OCI-LY7 (cell line): ENCODE measurements at regions of chr1 and their contacts with region 1.

Region 1: GRCh38 chr1:226121587-226122400 is 59.3 kb downstream of the H3-3A start:
- DNase-seq: peak; percentile 92
- H3K4me3 ChIP-seq: peak overlapping the region; percentile 75
- H3K27ac ChIP-seq: peak overlapping the region; percentile 95
- H3K4me1 ChIP-seq: peaks cover 62% of the 10 kb centered on the region
- CTCF ChIP-seq: peak; percentile 75

Region 2: GRCh38 chr1:225999227-225999911 is 122.4 kb before region 1 on chr1 and contains the start of gene SDE2:
- CTCF ChIA-PET with region 1: interaction called, 3 read pairs
- POLR2A ChIA-PET with region 1: interaction called, 4 read pairs
- intact Hi-C with region 1: loop called (anchors 2 kb)
- DNase-seq: peak; percentile 99
- H3K4me3 ChIP-seq: peak within 1 kb of the TSS; percentile 93
- H3K27ac ChIP-seq: peak within 1 kb of the TSS; percentile 96
- H3K4me1 ChIP-seq: peaks cover 64% of the 10 kb centered on the region
- CTCF ChIP-seq: no peak
- total RNA-seq, gene SDE2: 18.2 and 22.0 TPM in 2 replicates

Region 3: GRCh38 chr1:226109829-226110248 is 12.0 kb before region 1 on chr1:
- CTCF ChIA-PET with region 1: interaction called, 9 read pairs
- POLR2A ChIA-PET with region 1: interaction called, 14 read pairs
- intact Hi-C with region 1: loop called (anchors 1 kb)
- DNase-seq: peak; percentile 72
- H3K4me3 ChIP-seq: peak overlapping the region; percentile 73
- H3K27ac ChIP-seq: peak overlapping the region; percentile 80
- H3K4me1 ChIP-seq: peaks cover 41% of the 10 kb centered on the region
- CTCF ChIP-seq: no peak

Region 4: GRCh38 chr1:226186124-226187018 is 64.6 kb after region 1 on chr1 and contains the start of gene ACBD3:
- CTCF ChIA-PET with region 1: interaction called, 14 read pairs
- POLR2A ChIA-PET with region 1: interaction called, 10 read pairs
- intact Hi-C with region 1: loop called (anchors 1 kb)
- DNase-seq: peak; percentile 92
- H3K4me3 ChIP-seq: peak within 1 kb of the TSS; percentile 82
- H3K27ac ChIP-seq: peak within 1 kb of the TSS; percentile 66
- H3K4me1 ChIP-seq: peaks cover 42% of the 10 kb centered on the region
- CTCF ChIP-seq: 0 out of 2 replicates have a peak, but pooled peaks have one; percentile 15
- total RNA-seq, gene ACBD3: 30.3 and 35.3 TPM in 2 replicates

Region 5: DNA sequence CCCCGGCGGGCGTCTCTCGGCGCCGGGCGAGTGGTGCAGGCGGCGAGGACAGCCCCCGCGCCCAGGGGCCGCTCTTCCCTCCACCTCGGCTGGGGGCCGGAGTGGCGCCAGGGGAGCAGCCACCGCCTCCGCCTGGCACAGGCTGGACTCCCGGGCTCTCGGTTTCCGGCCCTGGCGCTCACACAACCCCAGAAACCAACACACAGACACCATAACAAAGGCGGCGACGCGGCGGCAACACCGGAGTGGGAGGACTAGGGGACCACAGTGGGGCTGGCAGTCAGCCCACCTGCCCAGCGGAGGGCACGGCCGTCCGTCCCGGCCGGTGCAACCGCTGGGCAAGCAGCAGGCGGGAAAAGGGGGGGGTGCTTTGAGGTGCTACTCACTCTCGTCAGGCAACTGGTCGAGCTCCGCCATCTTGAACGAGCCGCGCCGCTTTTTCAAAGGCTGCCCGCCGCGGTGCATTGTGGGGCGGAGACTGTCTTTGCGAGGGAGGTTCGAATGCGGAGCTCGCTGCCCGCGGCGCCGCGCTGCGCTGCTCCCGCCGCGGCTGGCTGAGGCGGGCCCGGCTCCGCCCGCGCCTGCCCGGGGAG is 187.0 kb after region 1 on chr1 and contains the start of gene LIN9:
- CTCF ChIA-PET with region 1: interaction called, 8 read pairs
- POLR2A ChIA-PET with region 1: interaction called, 5 read pairs
- intact Hi-C with region 1: loop called (anchors 1 kb)
- DNase-seq: peak; percentile 95
- H3K4me3 ChIP-seq: peak within 1 kb of the TSS; percentile 97
- H3K27ac ChIP-seq: peak within 1 kb of the TSS; percentile 76
- H3K4me1 ChIP-seq: peaks cover 53% of the 10 kb centered on the region
- CTCF ChIP-seq: peak; percentile 24; the same call in 1 of the 2 replicates
- total RNA-seq, gene LIN9: 17.2 and 19.7 TPM in 2 replicates

Region 6: DNA sequence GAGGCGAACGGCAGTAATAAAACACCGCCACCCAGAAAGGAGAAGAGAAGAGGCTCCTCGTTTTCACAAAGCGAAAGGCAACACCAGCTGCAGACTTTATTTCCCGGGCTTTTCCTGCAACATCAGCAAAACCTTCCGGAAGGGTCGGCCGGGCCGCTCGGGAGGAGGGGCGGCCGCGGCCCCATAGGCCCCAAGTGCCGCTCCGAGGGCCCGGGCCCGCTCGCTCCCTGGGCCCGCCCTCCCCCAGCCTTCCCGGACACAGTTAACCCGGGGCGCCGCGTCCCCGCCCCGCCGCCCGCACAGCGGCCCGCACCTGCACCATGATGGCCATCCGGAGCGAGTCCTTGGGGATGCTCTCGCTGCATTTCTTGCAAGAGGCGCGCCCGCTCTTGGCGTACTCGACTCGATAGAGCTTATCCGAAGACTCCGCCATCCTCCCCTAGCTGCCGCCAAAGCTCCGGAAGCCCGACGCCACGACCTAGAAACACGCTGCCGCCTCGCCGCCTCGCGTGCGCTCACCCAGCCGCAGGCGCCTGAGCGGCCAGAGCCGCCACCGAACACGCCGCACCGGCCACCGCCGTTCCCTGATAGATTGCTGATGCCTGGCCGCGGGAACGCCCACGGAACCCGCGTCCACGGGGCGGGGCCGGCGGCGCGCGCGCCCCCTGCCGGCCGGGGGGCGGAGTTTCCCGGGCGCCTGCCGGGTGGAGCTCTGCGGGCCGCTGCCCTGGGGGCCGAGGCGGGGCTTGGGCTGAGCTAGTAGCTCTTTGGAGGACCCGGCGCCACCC is 285.9 kb after region 1 on chr1 and contains the start of gene PARP1:
- CTCF ChIA-PET with region 1: interaction called, 6 read pairs
- POLR2A ChIA-PET with region 1: interaction called, 7 read pairs
- intact Hi-C with region 1: loop called (anchors 2 kb)
- DNase-seq: peak; percentile 98
- H3K4me3 ChIP-seq: peak within 1 kb of the TSS; percentile 91
- H3K27ac ChIP-seq: peak within 1 kb of the TSS; percentile 91
- H3K4me1 ChIP-seq: peaks cover 42% of the 10 kb centered on the region
- CTCF ChIP-seq: peak; percentile 85
- total RNA-seq, gene PARP1: 532 and 610 TPM in 2 replicates